ENCODE measurements at regions of chr17 and their contacts with region 1.

Region 1: GRCh38 chr17:76278952-76279741 is 14.0 kb downstream of the UBALD2 start:
- DNase-seq: peak; percentile 63 to 97 (median 91)

Region 2: GRCh38 chr17:76121932-76122430 is 157.2 kb before region 1 on chr17:
- intact Hi-C with region 1: loop called (anchors 5 kb)
- DNase-seq: peak in 6 of 42 donors; percentile 17 to 55 (median 52)

Region 3: DNA sequence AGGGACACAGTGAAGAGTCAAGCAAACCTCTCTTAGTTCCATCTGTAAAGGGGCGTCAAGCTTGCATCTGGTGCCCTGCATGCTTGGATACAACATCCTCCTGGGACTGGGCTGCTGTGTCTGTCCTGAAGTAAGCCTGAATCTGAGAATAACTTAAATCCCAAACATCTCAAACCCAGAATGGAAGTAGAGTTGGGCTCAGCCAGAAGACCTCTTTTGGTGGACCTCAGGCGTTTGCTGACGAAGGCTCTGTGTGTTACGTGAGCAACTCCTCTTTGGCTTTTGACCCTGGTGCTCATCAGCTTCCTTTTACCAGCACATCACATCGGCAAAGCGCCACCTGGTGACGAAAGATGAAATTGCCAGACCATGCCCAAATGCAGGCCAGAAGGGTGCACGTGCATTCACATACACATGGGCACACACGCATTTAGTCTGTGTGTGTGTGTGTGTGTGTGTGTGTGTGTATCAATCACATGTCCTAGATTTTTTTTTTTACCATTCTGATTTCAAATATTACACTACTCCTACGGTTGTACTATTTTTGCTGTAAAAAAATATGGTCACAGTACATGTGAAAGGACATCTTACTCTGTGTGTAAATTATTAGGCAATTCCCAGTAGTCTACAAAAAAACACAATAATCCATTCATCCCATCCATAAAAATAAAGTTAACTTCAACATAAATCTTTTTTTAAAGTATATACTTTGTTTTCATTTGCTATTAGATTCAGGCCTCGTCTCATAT is 97.0 kb before region 1 on chr17:
- intact Hi-C with region 1: loop called (anchors 10 kb)
- DNase-seq: peak; percentile 32 to 96 (median 90)